MCF 10A (cell line): ENCODE measurements at regions of chr6 and their contacts with region 1.

Region 1: GRCh38 chr6:117399924-117400323 is 25.8 kb downstream of the ROS1 start:
- DNase-seq: peak; percentile 38
- H3K4me3 Mint-ChIP-seq: no peak overlapping the region
- H3K27ac Mint-ChIP-seq: no peak overlapping the region
- H3K4me1 Mint-ChIP-seq: peaks cover 7% of the 10 kb centered on the region
- H3K27me3 Mint-ChIP-seq: no peaks in the 10 kb centered on the region
- CTCF ChIP-seq: peak; percentile 27

Region 2: GRCh38 chr6:117389227-117390057 is 10.5 kb before region 1 on chr6:
- CTCF ChIA-PET with region 1: interaction called, 19 read pairs
- POLR2A ChIA-PET with region 1: interaction called, 24 read pairs
- intact Hi-C with region 1: no loop called
- DNase-seq: peak; percentile 90
- H3K4me3 Mint-ChIP-seq: no peak overlapping the region
- H3K27ac Mint-ChIP-seq: peak overlapping the region; percentile 73
- H3K4me1 Mint-ChIP-seq: peaks cover 32% of the 10 kb centered on the region
- H3K27me3 Mint-ChIP-seq: no peaks in the 10 kb centered on the region
- CTCF ChIP-seq: no peak

Region 3: GRCh38 chr6:117414772-117415171 is 14.8 kb after region 1 on chr6:
- CTCF ChIA-PET with region 1: interaction called, 17 read pairs
- POLR2A ChIA-PET with region 1: interaction called, 9 read pairs
- intact Hi-C with region 1: no loop called
- DNase-seq: no peak
- H3K4me3 Mint-ChIP-seq: no peak overlapping the region
- H3K27ac Mint-ChIP-seq: peak overlapping the region; percentile 88
- H3K4me1 Mint-ChIP-seq: peaks cover 64% of the 10 kb centered on the region
- H3K27me3 Mint-ChIP-seq: no peaks in the 10 kb centered on the region
- CTCF ChIP-seq: no peak

Region 4: GRCh38 chr6:117425431-117426153 is 25.7 kb after region 1 on chr6 and contains the start of gene ROS1:
- CTCF ChIA-PET with region 1: interaction called, 21 read pairs
- POLR2A ChIA-PET with region 1: interaction called, 8 read pairs
- intact Hi-C with region 1: no loop called
- DNase-seq: peak; percentile 70
- H3K4me3 Mint-ChIP-seq: peak within 1 kb of the TSS; percentile 79
- H3K27ac Mint-ChIP-seq: peak within 1 kb of the TSS; percentile 76
- H3K4me1 Mint-ChIP-seq: peaks cover 24% of the 10 kb centered on the region
- H3K27me3 Mint-ChIP-seq: no peaks in the 10 kb centered on the region
- CTCF ChIP-seq: no peak
- total RNA-seq, gene ROS1: 63.0 and 69.6 TPM in 2 replicates

Region 5: DNA sequence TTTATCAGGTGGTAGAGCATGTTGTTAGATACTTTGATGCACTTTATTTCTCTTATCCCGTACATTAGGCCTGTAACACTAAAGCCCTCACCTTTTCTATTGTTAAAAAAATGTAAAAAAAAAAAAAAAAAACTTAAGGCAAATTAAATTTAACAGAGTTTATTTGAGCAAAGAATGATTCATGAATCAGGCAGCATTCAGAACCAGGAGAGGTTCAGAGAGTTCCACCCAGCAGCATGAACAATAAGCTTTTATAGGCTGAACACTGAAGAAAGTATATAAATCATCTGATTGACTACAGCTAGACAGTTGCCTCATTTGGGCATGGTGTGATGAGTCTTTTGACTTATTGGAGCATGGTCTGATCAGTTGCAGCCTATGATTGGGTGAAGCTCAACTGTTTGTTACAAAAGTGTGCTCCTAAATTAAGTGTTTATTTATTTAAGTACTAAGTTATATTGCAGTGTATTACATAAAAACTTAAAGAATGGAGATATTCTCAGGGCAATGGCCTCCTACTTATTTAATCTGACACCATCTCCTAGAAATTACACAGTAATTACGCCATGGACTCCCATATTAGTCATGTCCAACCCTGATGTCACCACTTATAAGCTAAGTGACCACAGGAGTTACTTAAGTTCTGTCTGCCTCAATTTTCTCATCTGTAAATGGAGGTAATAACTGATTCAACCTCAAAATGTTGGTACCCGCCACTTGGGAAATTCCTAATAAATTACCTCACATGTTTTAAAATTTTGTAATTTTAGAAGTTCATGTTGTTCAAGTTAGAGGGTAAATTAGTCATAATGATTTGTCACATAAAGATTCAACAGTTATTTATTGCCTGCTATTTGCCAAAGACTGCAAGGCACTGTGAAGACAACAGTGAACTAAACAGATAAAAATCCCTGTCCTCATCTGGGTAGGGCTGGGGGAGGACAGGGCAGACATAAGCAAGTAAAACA is 40.9 kb after region 1 on chr6:
- CTCF ChIA-PET with region 1: interaction called, 14 read pairs
- POLR2A ChIA-PET with region 1: interaction called, 24 read pairs
- intact Hi-C with region 1: no loop called
- DNase-seq: peak; percentile 93
- H3K4me3 Mint-ChIP-seq: peak overlapping the region; percentile 66
- H3K27ac Mint-ChIP-seq: peak overlapping the region; percentile 97
- H3K4me1 Mint-ChIP-seq: peaks cover 44% of the 10 kb centered on the region
- H3K27me3 Mint-ChIP-seq: no peaks in the 10 kb centered on the region
- CTCF ChIP-seq: no peak

Region 6: GRCh38 chr6:117482240-117483003 is 82.5 kb after region 1 on chr6 and contains the start of gene DCBLD1:
- CTCF ChIA-PET with region 1: interaction called, 15 read pairs
- POLR2A ChIA-PET with region 1: interaction called, 4 read pairs
- intact Hi-C with region 1: loop called (anchors 2 kb)
- DNase-seq: peak; percentile 75
- H3K4me3 Mint-ChIP-seq: peak within 1 kb of the TSS; percentile 92
- H3K27ac Mint-ChIP-seq: peak within 1 kb of the TSS; percentile 82
- H3K4me1 Mint-ChIP-seq: peaks cover 11% of the 10 kb centered on the region
- H3K27me3 Mint-ChIP-seq: no peaks in the 10 kb centered on the region
- CTCF ChIP-seq: no peak
- total RNA-seq, gene DCBLD1: 25.4 and 26.8 TPM in 2 replicates

Region 7: DNA sequence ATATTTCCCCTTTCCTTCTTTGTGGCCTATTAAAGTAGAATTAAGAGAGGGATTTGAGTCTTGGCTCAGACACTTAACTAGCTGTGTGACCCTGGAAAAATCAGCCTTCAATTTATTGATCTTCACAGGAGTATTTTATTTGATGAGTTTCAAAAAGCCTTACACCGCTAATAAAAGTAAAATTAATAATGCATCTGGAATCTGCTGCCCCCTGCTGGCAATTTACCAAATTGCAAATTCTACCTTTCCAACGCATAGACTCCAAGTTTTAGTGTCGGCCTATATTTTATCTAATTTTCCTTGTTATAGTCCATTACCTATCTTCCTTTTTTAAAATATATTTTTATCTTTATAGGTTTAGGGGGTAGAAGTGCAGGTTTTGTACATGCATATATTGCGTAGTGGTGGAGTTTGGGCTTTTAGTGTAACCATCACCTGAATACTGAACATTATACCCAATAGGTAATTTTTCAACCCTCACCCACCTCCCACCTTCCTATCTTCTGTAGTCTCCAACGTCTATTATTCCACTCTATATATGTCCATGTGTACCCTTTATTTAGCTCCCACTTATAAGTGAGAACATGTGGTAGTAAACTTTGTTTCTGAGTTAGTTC is 156.1 kb after region 1 on chr6:
- CTCF ChIA-PET with region 1: interaction called, 43 read pairs
- POLR2A ChIA-PET with region 1: no interaction called
- intact Hi-C with region 1: loop called (anchors 1 kb)
- DNase-seq: peak; percentile 67
- H3K4me3 Mint-ChIP-seq: no peak overlapping the region
- H3K27ac Mint-ChIP-seq: no peak overlapping the region
- H3K4me1 Mint-ChIP-seq: peaks cover 22% of the 10 kb centered on the region
- H3K27me3 Mint-ChIP-seq: no peaks in the 10 kb centered on the region
- CTCF ChIP-seq: peak; percentile 75